ENCODE measurements at regions of chr18 and their contacts with region 1.

Region 1: GRCh38 chr18:63320046-63320689 is 599 bp upstream of the BCL2 start:
- DNase-seq: peak; percentile 66 to 71
- H3K4me3 ChIP-seq: peak overlapping the region; percentile 60
- H3K27ac ChIP-seq: 0 out of 2 replicates have a peak overlapping the region, but pooled peaks have one; percentile 43
- H3K4me1 ChIP-seq: peaks cover 18% of the 10 kb centered on the region; the same call in 1 of the 2 replicates
- H3K27me3 ChIP-seq: no peaks in the 10 kb centered on the region
- CTCF ChIP-seq: no peak

Region 2: GRCh38 chr18:62584241-62585120 is 735.7 kb before region 1 on chr18:
- CTCF ChIA-PET with region 1: no interaction called
- POLR2A ChIA-PET with region 1: no interaction called
- intact Hi-C with region 1: loop called (anchors 5 kb)
- DNase-seq: peak; percentile 68 to 75
- H3K4me3 ChIP-seq: no peak overlapping the region
- H3K27ac ChIP-seq: no peak overlapping the region
- H3K4me1 ChIP-seq: no peaks in the 10 kb centered on the region
- H3K27me3 ChIP-seq: no peaks in the 10 kb centered on the region
- CTCF ChIP-seq: peak; percentile 93

Region 3: DNA sequence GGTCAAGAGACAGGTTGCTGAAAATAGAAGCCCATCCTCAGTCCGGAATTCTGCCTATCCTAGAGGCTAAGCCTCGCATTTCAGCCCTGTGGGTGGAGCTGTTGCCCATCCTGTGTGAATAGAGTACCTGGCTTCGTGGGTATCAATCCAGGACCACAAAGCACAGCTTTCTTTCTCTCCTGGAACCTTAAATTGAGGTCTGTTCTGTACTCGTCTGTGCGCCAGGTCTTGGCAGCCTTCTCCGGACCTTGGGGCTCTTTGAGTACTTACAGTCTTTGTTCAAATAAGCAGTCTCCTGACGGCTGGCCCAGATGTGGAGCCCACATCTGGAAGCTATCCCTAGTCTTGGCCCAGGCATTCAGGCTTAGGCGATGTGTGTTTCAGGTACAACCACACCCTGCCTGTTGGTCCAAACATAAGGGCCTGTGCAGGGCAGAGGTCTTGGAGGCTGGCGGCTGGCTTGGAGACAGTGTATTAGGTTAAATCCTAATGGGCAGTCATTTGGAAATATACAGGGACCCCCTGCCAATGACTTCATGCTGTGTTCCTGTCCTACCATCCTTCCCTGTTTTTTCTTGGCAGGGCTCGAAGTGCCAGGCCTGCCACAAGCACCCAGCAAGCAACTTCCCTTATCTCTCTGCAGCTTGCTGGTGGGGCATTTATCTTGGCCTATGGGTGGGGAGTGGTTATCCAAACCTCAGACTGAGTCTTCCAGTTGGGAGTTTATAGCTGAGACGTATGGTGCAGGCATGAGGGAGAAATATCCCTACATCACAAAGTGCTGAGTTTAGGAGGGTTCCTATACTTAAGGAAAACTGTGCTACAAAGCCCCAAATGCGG is 294.7 kb before region 1 on chr18:
- CTCF ChIA-PET with region 1: no interaction called
- POLR2A ChIA-PET with region 1: no interaction called
- intact Hi-C with region 1: loop called (anchors 2 kb)
- DNase-seq: peak in 1 of 2 experiments; percentile 10
- H3K4me3 ChIP-seq: no peak overlapping the region
- H3K27ac ChIP-seq: no peak overlapping the region
- H3K4me1 ChIP-seq: no peaks in the 10 kb centered on the region
- H3K27me3 ChIP-seq: no peaks in the 10 kb centered on the region
- CTCF ChIP-seq: peak; percentile 52

Region 4: GRCh38 chr18:63131106-63131958 is 188.8 kb before region 1 on chr18:
- CTCF ChIA-PET with region 1: interaction called, 7 read pairs
- POLR2A ChIA-PET with region 1: no interaction called
- intact Hi-C with region 1: loop called (anchors 1 kb)
- DNase-seq: peak in 1 of 2 experiments; percentile 7
- H3K4me3 ChIP-seq: no peak overlapping the region
- H3K27ac ChIP-seq: no peak overlapping the region
- H3K4me1 ChIP-seq: no peaks in the 10 kb centered on the region
- H3K27me3 ChIP-seq: no peaks in the 10 kb centered on the region
- CTCF ChIP-seq: peak; percentile 68

Region 5: GRCh38 chr18:63237881-63238667 is 82.1 kb before region 1 on chr18:
- CTCF ChIA-PET with region 1: interaction called, 8 read pairs
- POLR2A ChIA-PET with region 1: no interaction called
- intact Hi-C with region 1: loop called (anchors 5 kb)
- DNase-seq: peak; percentile 52 to 86
- H3K4me3 ChIP-seq: peak overlapping the region; percentile 42; the same call in 1 of the 2 replicates
- H3K27ac ChIP-seq: peak overlapping the region; percentile 76
- H3K4me1 ChIP-seq: peaks cover 22% of the 10 kb centered on the region
- H3K27me3 ChIP-seq: no peaks in the 10 kb centered on the region
- CTCF ChIP-seq: no peak

Region 6: DNA sequence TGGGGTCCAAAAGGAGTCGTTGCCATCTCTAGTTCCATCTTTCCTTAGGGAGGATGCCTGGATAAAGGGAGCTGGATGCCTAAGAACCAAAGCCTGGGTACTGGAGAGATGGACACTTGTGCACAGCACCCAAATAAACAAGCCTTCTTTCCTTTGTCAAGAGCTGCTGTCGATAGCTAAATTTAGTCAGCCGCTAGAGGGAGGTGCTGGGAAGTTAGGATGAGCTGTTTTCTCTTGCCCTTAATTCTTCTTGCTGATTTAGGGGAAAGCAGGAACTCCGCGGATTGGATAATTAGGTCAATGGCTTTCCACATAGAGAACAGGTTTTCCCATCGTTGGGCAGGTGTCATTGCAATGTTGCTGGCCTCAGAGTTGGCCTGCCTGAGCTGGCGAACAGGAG is 191.1 kb after region 1 on chr18:
- CTCF ChIA-PET with region 1: no interaction called
- POLR2A ChIA-PET with region 1: no interaction called
- intact Hi-C with region 1: no loop called
- DNase-seq: peak; percentile 43 to 63
- H3K4me3 ChIP-seq: no peak overlapping the region
- H3K27ac ChIP-seq: no peak overlapping the region
- H3K4me1 ChIP-seq: peaks cover 12% of the 10 kb centered on the region
- H3K27me3 ChIP-seq: no peaks in the 10 kb centered on the region
- CTCF ChIP-seq: peak; percentile 68